ENCODE measurements at regions of chr15 and their contacts with region 1.

Region 1: GRCh38 chr15:40044717-40045571 is 6.0 kb upstream of the SRP14 start:
- DNase-seq: peak; percentile 83
- H3K4me3 ChIP-seq: no peak overlapping the region
- H3K27ac ChIP-seq: peak overlapping the region; percentile 55 to 62
- H3K4me1 ChIP-seq: peaks cover 6% of the 10 kb centered on the region
- H3K27me3 ChIP-seq: no peaks in the 10 kb centered on the region
- CTCF ChIP-seq: peak; percentile 70 to 96 (median 91)
- POLR2A ChIP-seq: no peak

Region 2: DNA sequence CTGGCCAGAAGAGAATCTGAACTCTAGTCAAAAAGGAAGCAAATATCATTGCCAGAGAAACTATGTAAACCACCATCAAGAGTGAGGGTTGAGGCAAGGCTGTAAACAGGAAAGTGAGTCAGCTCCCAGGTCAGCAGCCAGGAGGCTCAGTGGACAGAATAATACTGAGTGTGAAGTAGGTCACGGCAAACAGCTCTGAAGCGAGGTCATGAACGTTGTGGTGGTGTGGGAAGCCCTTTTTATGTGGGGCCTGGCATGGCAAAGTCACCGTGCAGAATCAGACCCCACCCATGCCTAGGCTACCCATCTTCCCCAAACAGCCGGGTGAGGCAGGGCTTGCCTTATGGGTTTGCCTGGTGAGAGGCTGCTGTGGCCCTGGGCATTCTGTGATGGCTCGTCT is 420.1 kb before region 1 on chr15:
- intact Hi-C with region 1: no loop called
- DNase-seq: no peak
- H3K4me3 ChIP-seq: no peak overlapping the region
- H3K27ac ChIP-seq: peak overlapping the region; percentile 51 to 52
- H3K4me1 ChIP-seq: peaks cover 6% of the 10 kb centered on the region
- H3K27me3 ChIP-seq: no peaks in the 10 kb centered on the region
- CTCF ChIP-seq: peak in 1 of 4 experiments; percentile 29
- POLR2A ChIP-seq: no peak

Region 3: GRCh38 chr15:39976291-39977274 is 68.4 kb before region 1 on chr15:
- intact Hi-C with region 1: no loop called
- DNase-seq: peak; percentile 68
- H3K4me3 ChIP-seq: peak overlapping the region; percentile 42 to 43
- H3K27ac ChIP-seq: peak overlapping the region; percentile 71 to 83
- H3K4me1 ChIP-seq: no peaks in the 10 kb centered on the region
- H3K27me3 ChIP-seq: no peaks in the 10 kb centered on the region
- CTCF ChIP-seq: peak; percentile 18 to 64 (median 53)
- POLR2A ChIP-seq: no peak

Region 4: GRCh38 chr15:40108855-40109735 is 64.2 kb after region 1 on chr15 and contains the start of gene BMF:
- intact Hi-C with region 1: loop called (anchors 5 kb)
- DNase-seq: peak; percentile 100
- H3K4me3 ChIP-seq: peak within 1 kb of the TSS; percentile 93 to 96
- H3K27ac ChIP-seq: peak within 1 kb of the TSS; percentile 85 to 93
- H3K4me1 ChIP-seq: peaks cover 35% of the 10 kb centered on the region
- H3K27me3 ChIP-seq: no peaks in the 10 kb centered on the region
- CTCF ChIP-seq: peak in 2 of 4 experiments; percentile 49 to 52
- POLR2A ChIP-seq: peak; percentile 95
- total RNA-seq, gene BMF: 8.8 to 19.0 TPM

Region 5: GRCh38 chr15:40217159-40217824 is 172.3 kb after region 1 on chr15:
- intact Hi-C with region 1: loop called (anchors 5 kb)
- DNase-seq: peak; percentile 81
- H3K4me3 ChIP-seq: no peak overlapping the region
- H3K27ac ChIP-seq: peak overlapping the region; percentile 19 to 40
- H3K4me1 ChIP-seq: no peaks in the 10 kb centered on the region
- H3K27me3 ChIP-seq: no peaks in the 10 kb centered on the region
- CTCF ChIP-seq: peak; percentile 74 to 96 (median 92)
- POLR2A ChIP-seq: no peak

Region 6: GRCh38 chr15:40421246-40422157 is 376.6 kb after region 1 on chr15:
- intact Hi-C with region 1: loop called (anchors 10 kb)
- DNase-seq: peak; percentile 70
- H3K4me3 ChIP-seq: no peak overlapping the region
- H3K27ac ChIP-seq: peak overlapping the region; percentile 73 to 77
- H3K4me1 ChIP-seq: peaks cover 15% of the 10 kb centered on the region
- H3K27me3 ChIP-seq: no peaks in the 10 kb centered on the region
- CTCF ChIP-seq: peak; percentile 89 to 96 (median 92)
- POLR2A ChIP-seq: no peak